ENCODE measurements at regions of chrX and their contacts with region 1.

Region 1: DNA sequence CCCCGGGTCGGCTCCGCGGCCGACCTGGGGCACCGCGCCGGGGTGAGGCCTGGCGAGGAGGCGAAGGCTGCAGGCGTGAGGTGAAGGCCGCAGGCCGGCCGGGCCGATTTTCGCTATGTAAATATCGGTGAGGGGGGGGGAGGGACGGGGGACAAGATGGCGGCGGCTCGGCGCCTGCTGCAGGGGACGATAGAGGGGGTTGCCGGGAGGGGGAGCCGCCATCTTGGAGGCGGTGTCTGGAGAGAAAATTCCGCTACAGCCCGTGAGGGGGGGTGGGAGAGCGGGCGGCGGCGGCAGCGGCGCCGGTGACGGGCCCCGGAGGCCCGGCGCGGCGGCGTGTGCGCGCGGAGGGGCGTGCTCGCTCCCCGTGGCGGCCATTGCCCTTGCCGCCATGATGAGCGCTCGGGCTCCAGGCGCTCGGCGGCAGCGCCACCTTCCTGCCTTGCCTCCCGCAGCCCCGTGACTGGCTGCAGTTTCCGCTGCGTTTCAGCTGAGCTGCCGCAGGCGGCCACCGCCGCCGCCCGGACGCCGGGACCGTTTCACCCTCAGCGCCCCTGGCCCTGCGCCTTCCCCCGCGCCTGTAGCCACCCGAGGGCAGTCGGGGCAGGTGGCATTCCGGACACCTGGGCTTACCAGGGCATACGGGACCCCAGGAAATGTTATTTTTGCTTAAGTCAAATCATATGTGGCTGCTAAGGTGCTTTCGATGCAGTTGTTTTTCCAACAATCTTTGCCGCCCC is 692 bp downstream of the ZFX start:
- DNase-seq: peak; percentile 74 to 94 (median 88)
- H3K4me3 ChIP-seq: peak overlapping the region; percentile 70 to 94 (median 85)
- H3K4me3 Mint-ChIP-seq: peak overlapping the region; percentile 79 to 89
- H3K27ac ChIP-seq: peak overlapping the region; percentile 83 to 87
- H3K27ac Mint-ChIP-seq: peak overlapping the region; percentile 84 to 94 (median 90)
- H3K4me1 ChIP-seq: peaks cover 23 to 55% of the 10 kb centered on the region in 2 donors
- H3K4me1 Mint-ChIP-seq: peaks cover 39% of the 10 kb centered on the region
- H3K27me3 ChIP-seq: no peaks in the 10 kb centered on the region
- H3K27me3 Mint-ChIP-seq: no peaks in the 10 kb centered on the region
- CTCF ChIP-seq: peak; percentile 26

Region 2: DNA sequence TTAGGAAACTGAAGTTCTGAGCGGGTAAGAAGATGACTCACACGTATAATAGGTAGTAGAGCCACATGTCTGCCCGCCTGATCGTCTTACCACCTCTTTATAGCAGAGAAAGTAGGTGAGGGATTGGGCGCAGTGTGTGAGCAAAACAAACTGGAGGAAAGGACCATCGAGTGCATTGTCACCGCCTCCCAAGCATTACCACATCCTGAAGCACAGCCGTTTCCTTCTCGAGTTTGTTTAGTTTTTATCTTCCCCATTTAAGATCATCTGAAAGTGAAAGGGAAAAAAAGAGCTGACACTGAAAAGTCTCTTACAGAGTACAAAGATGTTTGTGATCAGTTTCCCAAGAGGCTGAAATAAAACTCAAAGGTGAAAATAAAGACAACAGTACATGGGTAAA is 329.7 kb after region 1 on chrX:
- intact Hi-C with region 1: loop called in 1 of 2 experiments (anchors 5 kb)
- DNase-seq: peak; percentile 76 to 84 (median 76)
- H3K4me3 ChIP-seq: peak overlapping the region; percentile 31 to 72 (median 65)
- H3K4me3 Mint-ChIP-seq: peak overlapping the region; percentile 64
- H3K27ac ChIP-seq: peak overlapping the region; percentile 94 to 95
- H3K27ac Mint-ChIP-seq: peak overlapping the region; percentile 88 to 97 (median 94)
- H3K4me1 ChIP-seq: peaks cover 53 to 57% of the 10 kb centered on the region in 2 donors
- H3K4me1 Mint-ChIP-seq: peaks cover 59% of the 10 kb centered on the region
- H3K27me3 ChIP-seq: no peaks in the 10 kb centered on the region
- H3K27me3 Mint-ChIP-seq: peaks cover 0 to 5% (median 1%) of the 10 kb centered on the region in 3 donors
- CTCF ChIP-seq: no peak